ENCODE measurements at regions of chr10 and their contacts with region 1.

Region 1: GRCh38 chr10:128382225-128382624 is 256.0 kb upstream of the MKI67 start:
- DNase-seq: no peak
- H3K4me3 ChIP-seq: no peak overlapping the region
- H3K27ac ChIP-seq: no peak overlapping the region
- H3K4me1 ChIP-seq: no peaks in the 10 kb centered on the region
- H3K27me3 ChIP-seq: no peaks in the 10 kb centered on the region
- CTCF ChIP-seq: no peak

Region 2: DNA sequence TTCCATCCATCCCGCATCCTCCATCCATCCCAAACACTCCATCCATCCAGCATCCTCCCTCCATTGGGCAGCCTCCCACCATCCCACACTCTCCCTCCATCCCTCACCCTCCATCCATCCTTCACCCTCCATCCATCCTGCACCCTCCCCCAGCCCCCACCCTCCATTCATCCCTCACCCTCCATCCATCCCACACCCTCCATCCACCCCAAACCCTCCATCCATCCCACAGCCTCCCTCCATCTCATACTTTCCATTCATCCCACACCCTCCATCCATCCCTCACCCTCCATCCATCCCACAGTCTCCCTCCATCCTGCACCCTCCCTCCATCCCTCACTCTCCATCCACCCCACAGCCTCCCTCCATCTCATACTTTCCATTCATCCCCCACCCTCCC is 584.9 kb before region 1 on chr10:
- dilution Hi-C with region 1: no loop called
- DNase-seq: no peak
- H3K4me3 ChIP-seq: no peak overlapping the region
- H3K27ac ChIP-seq: no peak overlapping the region
- H3K4me1 ChIP-seq: no peaks in the 10 kb centered on the region
- H3K27me3 ChIP-seq: no peaks in the 10 kb centered on the region
- CTCF ChIP-seq: no peak

Region 3: DNA sequence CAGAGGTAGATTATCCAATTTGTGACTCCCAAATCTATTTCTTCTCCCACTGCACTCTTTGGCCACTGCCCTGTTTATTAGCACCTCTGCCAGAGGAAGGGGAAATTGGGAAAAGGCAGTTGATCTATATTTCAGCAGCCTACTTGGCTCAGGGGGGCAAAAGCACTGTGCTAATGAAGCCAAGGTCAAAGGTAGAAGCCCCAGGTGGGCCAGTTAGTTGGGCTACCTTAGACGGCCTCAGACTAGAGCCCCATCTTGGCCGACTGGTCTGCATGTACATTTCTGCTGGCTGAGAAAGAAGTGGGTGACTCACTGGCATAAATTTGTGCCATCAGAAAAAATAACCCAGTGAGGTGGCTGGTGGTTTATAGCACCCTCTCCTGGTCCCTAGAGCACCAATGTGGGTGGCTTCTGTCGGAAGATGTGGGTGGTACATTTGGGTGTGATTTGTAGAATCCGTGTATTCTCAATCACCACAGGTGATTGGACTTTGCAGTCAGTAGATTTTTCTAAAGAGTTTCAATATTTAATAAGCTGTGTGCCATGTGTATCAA is 37.3 kb after region 1 on chr10:
- dilution Hi-C with region 1: loop called (anchors 5 kb)
- DNase-seq: no peak
- H3K4me3 ChIP-seq: no peak overlapping the region
- H3K27ac ChIP-seq: no peak overlapping the region
- H3K4me1 ChIP-seq: no peaks in the 10 kb centered on the region
- H3K27me3 ChIP-seq: no peaks in the 10 kb centered on the region
- CTCF ChIP-seq: no peak

Measured in keratinocyte (primary cell).